Activated CD4-positive, alpha-beta T cell treated with anti-CD3 and anti-CD28 coated beads for 36 hours (primary cell): ENCODE measurements at regions of chr21 and their contacts with region 1.

Region 1: GRCh38 chr21:16342932-16343331 is 613.1 kb downstream of the USP25 start:
- DNase-seq: no peak
- ATAC-seq: no peak
- H3K4me3 Mint-ChIP-seq: no peak overlapping the region
- H3K27ac Mint-ChIP-seq: no peak overlapping the region
- H3K4me1 Mint-ChIP-seq: no peaks in the 10 kb centered on the region
- H3K27me3 Mint-ChIP-seq: no peaks in the 10 kb centered on the region

Region 2: DNA sequence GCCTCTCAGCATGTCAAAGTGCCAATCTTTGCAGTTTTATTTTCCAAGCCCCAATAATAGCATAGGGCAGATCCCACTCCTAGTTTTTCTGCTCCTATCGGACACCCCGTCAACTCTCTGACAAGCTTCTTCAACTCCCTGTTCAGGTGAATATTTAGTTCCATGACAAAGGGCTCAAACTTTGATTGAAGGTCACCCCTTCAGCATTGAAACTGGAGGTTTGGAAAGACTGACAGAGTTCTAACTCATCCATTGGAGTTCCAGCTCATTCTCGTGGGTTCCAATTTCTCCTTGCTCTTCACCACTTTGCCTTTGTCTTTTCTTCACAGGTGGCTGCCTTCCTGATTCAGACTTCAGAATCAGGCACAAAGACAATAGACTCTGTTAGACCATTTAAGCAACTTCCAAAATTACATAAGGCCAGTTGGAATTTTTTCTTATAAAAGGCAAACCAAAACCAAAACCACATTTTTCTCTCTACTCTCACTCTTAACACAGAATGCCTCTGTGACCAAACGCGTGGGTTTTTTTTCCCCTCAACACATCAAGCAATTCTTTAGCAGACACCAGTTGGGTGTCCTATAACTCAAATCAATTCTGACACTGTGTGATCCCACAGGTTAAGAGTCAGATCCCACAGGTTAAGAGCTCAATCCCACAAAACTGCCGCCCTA is 782.4 kb before region 1 on chr21:
- CTCF ChIA-PET with region 1: no interaction called
- POLR2A ChIA-PET with region 1: interaction called, 16 read pairs
- intact Hi-C with region 1: no loop called
- DNase-seq: peak; percentile 23
- ATAC-seq: peak; percentile 55
- H3K4me3 Mint-ChIP-seq: no peak overlapping the region
- H3K27ac Mint-ChIP-seq: no peak overlapping the region
- H3K4me1 Mint-ChIP-seq: peaks cover 9% of the 10 kb centered on the region
- H3K27me3 Mint-ChIP-seq: peaks cover 2% of the 10 kb centered on the region

Region 3: GRCh38 chr21:16294128-16294527 is 48.8 kb before region 1 on chr21:
- CTCF ChIA-PET with region 1: no interaction called
- POLR2A ChIA-PET with region 1: no interaction called
- intact Hi-C with region 1: loop called in 1 of 2 experiments (anchors 5 kb)
- DNase-seq: no peak
- ATAC-seq: no peak
- H3K4me3 Mint-ChIP-seq: no peak overlapping the region
- H3K27ac Mint-ChIP-seq: no peak overlapping the region
- H3K4me1 Mint-ChIP-seq: no peaks in the 10 kb centered on the region
- H3K27me3 Mint-ChIP-seq: no peaks in the 10 kb centered on the region

Region 4: DNA sequence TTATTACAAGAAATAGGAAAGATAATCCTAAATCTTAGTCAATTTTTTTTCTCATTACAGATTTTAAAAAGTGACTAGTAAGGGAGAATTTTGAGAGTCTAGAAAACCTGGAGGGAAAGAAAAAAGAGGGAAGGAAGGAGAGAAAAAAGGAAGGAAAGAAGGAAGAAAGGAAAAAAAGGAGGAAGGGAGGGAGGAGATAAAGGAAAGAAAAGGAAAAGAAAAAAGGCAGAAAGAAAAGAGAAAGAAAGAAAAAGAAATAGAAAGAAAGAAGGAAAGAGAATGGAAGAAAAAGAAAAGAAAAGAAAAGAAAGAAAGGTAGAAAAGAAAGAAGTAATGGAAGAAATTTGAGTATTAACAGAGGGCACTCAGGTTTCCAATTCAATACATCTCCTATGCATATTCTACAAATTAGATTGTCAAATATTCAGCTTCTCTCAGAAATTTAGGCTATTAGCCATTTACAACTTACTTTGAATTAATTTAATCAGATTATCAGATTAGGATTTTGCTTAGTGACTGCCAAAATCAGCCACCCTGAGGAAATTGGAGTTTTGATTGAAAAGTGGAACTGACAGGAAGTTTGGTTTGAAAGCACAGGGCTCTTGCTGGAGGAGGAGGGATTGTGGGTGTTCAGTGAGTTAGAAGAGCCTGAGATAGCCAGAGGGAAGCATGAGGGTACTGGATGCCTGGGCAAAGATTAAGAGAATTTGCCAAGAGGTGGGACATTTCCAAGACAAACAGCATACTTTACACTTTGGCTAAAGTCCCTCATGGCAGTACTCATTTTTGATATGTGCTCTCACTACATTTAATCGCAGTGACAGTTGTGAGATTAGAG is 64.7 kb after region 1 on chr21:
- CTCF ChIA-PET with region 1: no interaction called
- POLR2A ChIA-PET with region 1: no interaction called
- intact Hi-C with region 1: no loop called
- DNase-seq: no peak
- ATAC-seq: no peak
- H3K4me3 Mint-ChIP-seq: no peak overlapping the region
- H3K27ac Mint-ChIP-seq: no peak overlapping the region
- H3K4me1 Mint-ChIP-seq: no peaks in the 10 kb centered on the region
- H3K27me3 Mint-ChIP-seq: no peaks in the 10 kb centered on the region